ENCODE measurements at regions of chr4 and their contacts with region 1.

Region 1: GRCh38 chr4:47562297-47562696 is 77.2 kb downstream of the ATP10D start:
- DNase-seq: no peak
- ATAC-seq: peak; percentile 45
- H3K4me3 ChIP-seq: no peak overlapping the region
- H3K4me3 Mint-ChIP-seq: no peak overlapping the region
- H3K27ac ChIP-seq: no peak overlapping the region
- H3K27ac Mint-ChIP-seq: no peak overlapping the region
- H3K4me1 ChIP-seq: peaks cover 0 to 6% of the 10 kb centered on the region in 2 donors
- H3K4me1 Mint-ChIP-seq: peaks cover 0 to 11% (median 5%) of the 10 kb centered on the region in 7 donors
- H3K27me3 ChIP-seq: no peaks in the 10 kb centered on the region
- H3K27me3 Mint-ChIP-seq: no peaks in the 10 kb centered on the region

Region 2: GRCh38 chr4:47383829-47384427 is 178.4 kb before region 1 on chr4:
- CTCF ChIA-PET with region 1: interaction called, 3 read pairs
- POLR2A ChIA-PET with region 1: no interaction called
- intact Hi-C with region 1: loop called (anchors 2 to 10 kb)
- DNase-seq: peak in 5 of 9 donors; percentile 1 to 19 (median 11)
- ATAC-seq: no peak
- H3K4me3 ChIP-seq: no peak overlapping the region
- H3K4me3 Mint-ChIP-seq: no peak overlapping the region
- H3K27ac ChIP-seq: no peak overlapping the region
- H3K27ac Mint-ChIP-seq: no peak overlapping the region
- H3K4me1 ChIP-seq: no peaks in the 10 kb centered on the region
- H3K4me1 Mint-ChIP-seq: peaks cover 0 to 4% (median 0%) of the 10 kb centered on the region in 7 donors
- H3K27me3 ChIP-seq: no peaks in the 10 kb centered on the region
- H3K27me3 Mint-ChIP-seq: peaks cover 5 to 32% (median 17%) of the 10 kb centered on the region in 5 donors

Region 3: GRCh38 chr4:47485047-47485692 is 77.1 kb before region 1 on chr4 and contains the start of gene ATP10D:
- CTCF ChIA-PET with region 1: interaction called, 3 read pairs
- POLR2A ChIA-PET with region 1: no interaction called
- intact Hi-C with region 1: loop called (anchors 1 to 2 kb)
- DNase-seq: peak; percentile 56 to 77 (median 66)
- ATAC-seq: peak; percentile 97
- H3K4me3 ChIP-seq: peak within 1 kb of the TSS; percentile 75
- H3K4me3 Mint-ChIP-seq: peak within 1 kb of the TSS; percentile 87 to 98 (median 94)
- H3K27ac ChIP-seq: peak within 1 kb of the TSS; percentile 70
- H3K27ac Mint-ChIP-seq: peak within 1 kb of the TSS; percentile 78 to 97 (median 89)
- H3K4me1 ChIP-seq: peaks cover 7 to 9% of the 10 kb centered on the region in 2 donors
- H3K4me1 Mint-ChIP-seq: peaks cover 15 to 36% (median 26%) of the 10 kb centered on the region in 7 donors
- H3K27me3 ChIP-seq: no peaks in the 10 kb centered on the region
- H3K27me3 Mint-ChIP-seq: peaks cover 0 to 5% (median 0%) of the 10 kb centered on the region in 5 donors
- total RNA-seq, gene ATP10D: 3.3 to 29.0 (median 6.1) TPM

Region 4: GRCh38 chr4:47510506-47511143 is 51.7 kb before region 1 on chr4:
- CTCF ChIA-PET with region 1: no interaction called
- POLR2A ChIA-PET with region 1: no interaction called
- intact Hi-C with region 1: loop called in 1 of 2 experiments (anchors 1 kb)
- DNase-seq: no peak
- ATAC-seq: peak; percentile 87
- H3K4me3 ChIP-seq: no peak overlapping the region
- H3K4me3 Mint-ChIP-seq: no peak overlapping the region
- H3K27ac ChIP-seq: no peak overlapping the region
- H3K27ac Mint-ChIP-seq: no peak overlapping the region
- H3K4me1 ChIP-seq: peaks cover 0 to 9% of the 10 kb centered on the region in 2 donors
- H3K4me1 Mint-ChIP-seq: peaks cover 0 to 15% (median 7%) of the 10 kb centered on the region in 7 donors
- H3K27me3 ChIP-seq: no peaks in the 10 kb centered on the region
- H3K27me3 Mint-ChIP-seq: peaks cover 0 to 13% (median 0%) of the 10 kb centered on the region in 5 donors

Measured in naive thymus-derived CD4-positive, alpha-beta T cell (primary cell).